ENCODE measurements at regions of chr11 and their contacts with region 1.

Region 1: GRCh38 chr11:116641561-116642045 is 131.2 kb downstream of the BUD13 start:
- DNase-seq: no peak
- ATAC-seq: peak; percentile 92
- H3K4me3 ChIP-seq: no peak overlapping the region
- H3K27ac ChIP-seq: no peak overlapping the region
- H3K4me1 ChIP-seq: no peaks in the 10 kb centered on the region
- H3K27me3 ChIP-seq: no peaks in the 10 kb centered on the region
- CTCF ChIP-seq: peak; percentile 79 to 82 (median 81)
- EP300 ChIP-seq: no peak
- POLR2A ChIP-seq: no peak
- RAD21 ChIP-seq: peak; percentile 76

Region 2: DNA sequence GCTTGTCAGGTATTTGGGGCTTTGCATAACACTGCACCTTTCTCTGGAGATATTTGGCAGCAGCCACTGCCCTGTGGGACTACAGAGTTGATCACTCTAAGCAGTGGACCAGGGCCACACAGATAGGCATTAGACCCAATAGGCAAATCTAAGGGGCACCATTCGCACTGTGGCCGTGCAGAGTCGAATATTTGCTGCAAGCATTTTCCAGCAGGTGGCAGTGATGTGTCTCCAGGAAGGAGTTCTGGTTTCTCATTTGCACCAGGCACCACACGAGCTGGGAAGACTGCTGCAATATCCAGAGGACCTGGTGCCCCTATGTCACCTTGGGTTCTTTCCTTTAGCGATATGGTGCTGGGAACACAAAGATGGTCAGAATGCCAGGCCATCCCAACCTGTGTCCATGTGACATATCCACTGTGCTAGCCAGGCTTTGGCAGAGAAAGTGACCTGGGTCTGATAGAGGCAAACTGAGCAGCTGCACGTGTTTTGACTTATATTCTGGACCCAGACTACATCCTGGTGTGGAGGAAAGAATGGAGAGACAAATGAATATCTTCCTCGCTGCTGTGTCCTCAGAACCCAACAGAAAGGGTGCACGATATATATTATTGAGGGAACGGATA is 187.5 kb before region 1 on chr11:
- CTCF ChIA-PET with region 1: no interaction called
- POLR2A ChIA-PET with region 1: no interaction called
- RAD21 ChIA-PET with region 1: no interaction called
- SMC1A ChIA-PET with region 1: interaction called, 4 read pairs
- in situ Hi-C with region 1: no loop called
- intact Hi-C with region 1: loop called (anchors 5 kb)
- DNase-seq: no peak
- ATAC-seq: peak; percentile 80
- H3K4me3 ChIP-seq: no peak overlapping the region
- H3K27ac ChIP-seq: no peak overlapping the region
- H3K4me1 ChIP-seq: no peaks in the 10 kb centered on the region
- H3K27me3 ChIP-seq: no peaks in the 10 kb centered on the region; a peak in 2 of 4 replicates
- CTCF ChIP-seq: peak; percentile 63 to 67 (median 66)
- EP300 ChIP-seq: no peak
- POLR2A ChIP-seq: no peak
- RAD21 ChIP-seq: peak; percentile 49

Region 3: DNA sequence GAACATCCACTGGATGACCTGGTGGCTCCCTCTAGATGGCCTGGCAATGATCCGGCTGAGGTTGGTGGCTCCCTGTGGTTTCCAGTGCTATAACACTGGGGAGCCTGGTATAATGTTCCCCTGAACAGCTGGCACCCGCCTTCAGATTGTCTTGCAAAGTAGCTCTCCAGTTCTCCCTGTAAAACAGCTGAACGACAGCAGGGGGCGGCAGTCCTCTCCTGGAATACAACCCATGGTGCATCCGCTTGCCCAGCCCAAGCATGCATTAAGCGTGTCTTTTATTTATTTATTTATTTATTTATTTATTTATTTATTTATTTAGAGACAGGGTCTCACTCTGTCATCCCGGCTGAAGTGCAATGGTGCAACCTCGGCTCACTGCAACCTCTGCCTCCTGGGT is 127.7 kb before region 1 on chr11:
- CTCF ChIA-PET with region 1: interaction called, 19 read pairs
- POLR2A ChIA-PET with region 1: no interaction called
- RAD21 ChIA-PET with region 1: interaction called, 6 read pairs
- SMC1A ChIA-PET with region 1: interaction called, 10 read pairs
- in situ Hi-C with region 1: no loop called
- intact Hi-C with region 1: loop called (anchors 1 kb)
- DNase-seq: no peak
- ATAC-seq: peak; percentile 53
- H3K4me3 ChIP-seq: no peak overlapping the region
- H3K27ac ChIP-seq: no peak overlapping the region
- H3K4me1 ChIP-seq: no peaks in the 10 kb centered on the region
- H3K27me3 ChIP-seq: peaks cover 0 to 3% of the 10 kb centered on the region in 2 experiments; a peak in 2 of 4 replicates
- CTCF ChIP-seq: peak; percentile 36 to 52 (median 37); a peak in 5 of 6 replicates
- EP300 ChIP-seq: no peak
- POLR2A ChIP-seq: no peak
- RAD21 ChIP-seq: peak; percentile 50

Measured in GM12878 (cell line).